ENCODE measurements at regions of chr5 and their contacts with region 1.

Region 1: DNA sequence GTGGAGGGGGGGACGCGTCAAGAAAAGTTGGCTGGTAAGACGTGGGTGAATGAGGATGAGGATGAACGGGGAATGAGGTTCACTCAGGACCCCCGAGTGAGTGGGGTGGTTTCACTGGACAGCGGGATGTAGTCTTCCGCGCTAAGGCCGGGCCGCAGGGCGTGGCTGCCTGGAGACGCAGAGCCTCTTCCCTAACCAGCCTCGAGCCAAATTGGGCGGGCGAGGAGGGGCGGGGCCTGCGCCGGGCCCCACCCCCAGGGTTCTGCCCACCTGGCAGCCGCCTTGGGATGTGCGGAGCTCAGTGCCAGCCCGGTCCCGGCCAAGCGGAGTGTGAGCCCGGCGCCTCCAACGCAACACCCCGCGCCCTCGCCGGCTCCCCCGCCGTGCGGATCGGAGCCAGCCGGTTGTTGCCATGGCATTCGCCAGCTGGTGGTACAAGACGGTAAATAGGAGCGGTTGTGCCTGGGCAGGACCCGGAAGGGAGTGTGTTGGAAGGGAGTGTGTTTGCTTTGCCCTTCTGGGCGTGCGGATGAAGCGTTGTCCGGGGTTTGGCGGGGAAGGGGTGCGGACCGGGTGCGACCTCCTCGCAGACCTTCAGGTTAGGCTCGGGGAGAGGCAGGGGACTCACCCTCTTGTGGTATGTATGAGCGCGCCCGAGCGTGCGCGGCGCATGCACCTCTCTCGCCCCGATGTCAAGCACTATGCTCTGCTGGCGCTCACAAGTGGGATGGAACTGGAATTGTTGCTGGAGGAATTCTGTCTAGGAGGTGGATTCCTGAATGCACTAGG is 743 bp downstream of the CAST start:
- DNase-seq: peak; percentile 84 to 89 (median 86)
- H3K4me3 ChIP-seq: peak overlapping the region; percentile 59 to 89
- H3K4me3 Mint-ChIP-seq: peak overlapping the region; percentile 96 to 98 (median 97)
- H3K27ac ChIP-seq: peak overlapping the region; percentile 93
- H3K27ac Mint-ChIP-seq: peak overlapping the region; percentile 96 to 99 (median 98)
- H3K4me1 ChIP-seq: peaks cover 48% of the 10 kb centered on the region
- H3K4me1 Mint-ChIP-seq: peaks cover 36 to 69% (median 53%) of the 10 kb centered on the region in 4 donors
- H3K27me3 ChIP-seq: no peaks in the 10 kb centered on the region
- H3K27me3 Mint-ChIP-seq: no peaks in the 10 kb centered on the region

Region 2: GRCh38 chr5:95646554-95647431 is 1016.1 kb before region 1 on chr5 and contains the start of gene RFESD:
- CTCF ChIA-PET with region 1: no interaction called
- POLR2A ChIA-PET with region 1: no interaction called
- intact Hi-C with region 1: loop called (anchors 10 kb)
- DNase-seq: peak; percentile 91 to 95 (median 92)
- H3K4me3 ChIP-seq: peak within 1 kb of the TSS; percentile 71 to 94
- H3K4me3 Mint-ChIP-seq: peak within 1 kb of the TSS; percentile 87 to 93 (median 89)
- H3K27ac ChIP-seq: peak within 1 kb of the TSS; percentile 84
- H3K27ac Mint-ChIP-seq: peak within 1 kb of the TSS; percentile 57 to 94 (median 93)
- H3K4me1 ChIP-seq: peaks cover 31% of the 10 kb centered on the region
- H3K4me1 Mint-ChIP-seq: peaks cover 20 to 42% (median 26%) of the 10 kb centered on the region in 4 donors
- H3K27me3 ChIP-seq: no peaks in the 10 kb centered on the region
- H3K27me3 Mint-ChIP-seq: no peaks in the 10 kb centered on the region
- total RNA-seq, gene RFESD: 9.1 to 9.3 TPM

Region 3: DNA sequence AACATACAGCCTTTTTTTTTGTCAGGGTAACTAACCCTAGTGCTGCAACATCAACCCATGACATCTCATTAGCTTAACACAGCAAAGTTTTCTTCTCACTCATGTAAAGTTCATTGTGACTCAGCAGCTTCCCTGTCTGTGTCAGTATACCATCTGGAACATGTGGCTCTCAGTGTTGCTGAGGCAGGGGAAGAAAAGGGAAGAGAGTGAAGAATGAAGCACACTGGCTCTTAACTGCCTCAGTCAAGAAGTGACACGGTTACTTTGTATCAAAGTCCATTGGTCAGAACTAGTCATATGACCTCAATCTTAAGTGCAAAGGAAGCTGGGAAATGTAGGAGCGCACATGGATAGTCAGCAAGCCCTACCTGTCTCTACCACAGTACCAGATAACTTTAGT is 516.2 kb before region 1 on chr5:
- CTCF ChIA-PET with region 1: no interaction called
- POLR2A ChIA-PET with region 1: no interaction called
- intact Hi-C with region 1: no loop called
- DNase-seq: no peak
- H3K4me3 ChIP-seq: no peak overlapping the region
- H3K4me3 Mint-ChIP-seq: no peak overlapping the region
- H3K27ac ChIP-seq: no peak overlapping the region
- H3K27ac Mint-ChIP-seq: no peak overlapping the region
- H3K4me1 ChIP-seq: no peaks in the 10 kb centered on the region
- H3K4me1 Mint-ChIP-seq: no peaks in the 10 kb centered on the region
- H3K27me3 ChIP-seq: no peaks in the 10 kb centered on the region
- H3K27me3 Mint-ChIP-seq: peaks cover 0 to 3% of the 10 kb centered on the region in 2 donors

Region 4: GRCh38 chr5:96536991-96537785 is 125.7 kb before region 1 on chr5:
- CTCF ChIA-PET with region 1: no interaction called
- POLR2A ChIA-PET with region 1: interaction called, 6 read pairs
- intact Hi-C with region 1: loop called (anchors 2 kb)
- DNase-seq: peak; percentile 48 to 83 (median 75)
- H3K4me3 ChIP-seq: peak overlapping the region in 1 of 2 donors; percentile 1
- H3K4me3 Mint-ChIP-seq: peak overlapping the region; percentile 18 to 93 (median 76)
- H3K27ac ChIP-seq: peak overlapping the region; percentile 38
- H3K27ac Mint-ChIP-seq: peak overlapping the region; percentile 83 to 100 (median 94)
- H3K4me1 ChIP-seq: peaks cover 30% of the 10 kb centered on the region
- H3K4me1 Mint-ChIP-seq: peaks cover 23 to 41% (median 30%) of the 10 kb centered on the region in 4 donors
- H3K27me3 ChIP-seq: no peaks in the 10 kb centered on the region
- H3K27me3 Mint-ChIP-seq: no peaks in the 10 kb centered on the region

Region 5: DNA sequence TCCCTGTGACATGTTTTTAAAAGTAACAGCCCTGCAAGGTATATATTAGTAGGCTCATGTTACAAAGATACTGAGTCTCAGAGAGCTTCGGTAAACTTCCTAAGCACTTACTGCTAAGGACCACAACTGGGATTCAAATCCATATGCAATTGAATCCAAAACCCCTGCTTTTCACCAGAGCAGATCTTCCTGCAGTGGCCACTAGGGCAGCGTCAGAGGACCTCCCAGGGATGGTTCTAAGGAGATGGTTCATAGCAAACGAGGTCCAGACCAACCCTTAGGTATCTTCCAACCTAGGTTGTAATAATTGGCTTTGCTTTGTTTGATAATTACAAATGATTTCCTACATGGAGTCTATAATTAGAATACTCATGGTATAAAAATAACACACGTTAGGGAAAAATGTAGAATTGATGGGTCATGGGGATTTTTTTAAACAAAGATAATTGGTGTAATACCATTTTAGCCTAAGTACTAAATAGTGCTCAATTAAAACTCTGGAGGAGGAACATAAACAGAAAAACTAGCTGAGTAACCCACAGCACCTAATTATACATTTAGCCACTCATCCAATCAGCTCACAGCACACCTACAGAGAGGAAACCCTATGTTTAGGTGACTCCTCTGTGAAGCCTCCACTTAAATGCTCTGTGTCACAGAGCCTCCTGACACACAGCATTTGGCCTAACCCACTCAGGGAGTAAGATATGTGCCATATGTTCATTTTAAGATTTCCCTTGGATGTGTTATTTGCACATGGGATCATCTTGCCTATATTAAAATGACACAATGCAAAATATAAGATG is 10.8 kb before region 1 on chr5:
- CTCF ChIA-PET with region 1: interaction called, 4 read pairs
- POLR2A ChIA-PET with region 1: interaction called, 14 read pairs
- intact Hi-C with region 1: no loop called
- DNase-seq: no peak
- H3K4me3 ChIP-seq: no peak overlapping the region
- H3K4me3 Mint-ChIP-seq: no peak overlapping the region
- H3K27ac ChIP-seq: no peak overlapping the region
- H3K27ac Mint-ChIP-seq: no peak overlapping the region
- H3K4me1 ChIP-seq: peaks cover 22% of the 10 kb centered on the region
- H3K4me1 Mint-ChIP-seq: peaks cover 14 to 30% (median 23%) of the 10 kb centered on the region in 4 donors
- H3K27me3 ChIP-seq: no peaks in the 10 kb centered on the region
- H3K27me3 Mint-ChIP-seq: peaks cover 3 to 11% of the 10 kb centered on the region in 2 donors

Region 6: GRCh38 chr5:96702503-96703383 is 39.8 kb after region 1 on chr5:
- CTCF ChIA-PET with region 1: interaction called, 3 read pairs
- POLR2A ChIA-PET with region 1: interaction called, 50 read pairs
- intact Hi-C with region 1: loop called (anchors 1 kb)
- DNase-seq: peak; percentile 75 to 93 (median 80)
- H3K4me3 ChIP-seq: peak overlapping the region; percentile 13 to 59
- H3K4me3 Mint-ChIP-seq: peak overlapping the region; percentile 87 to 97 (median 94)
- H3K27ac ChIP-seq: peak overlapping the region; percentile 92
- H3K27ac Mint-ChIP-seq: peak overlapping the region; percentile 97 to 99 (median 98)
- H3K4me1 ChIP-seq: peaks cover 23% of the 10 kb centered on the region
- H3K4me1 Mint-ChIP-seq: peaks cover 30 to 64% (median 47%) of the 10 kb centered on the region in 4 donors
- H3K27me3 ChIP-seq: no peaks in the 10 kb centered on the region
- H3K27me3 Mint-ChIP-seq: no peaks in the 10 kb centered on the region

Region 7: DNA sequence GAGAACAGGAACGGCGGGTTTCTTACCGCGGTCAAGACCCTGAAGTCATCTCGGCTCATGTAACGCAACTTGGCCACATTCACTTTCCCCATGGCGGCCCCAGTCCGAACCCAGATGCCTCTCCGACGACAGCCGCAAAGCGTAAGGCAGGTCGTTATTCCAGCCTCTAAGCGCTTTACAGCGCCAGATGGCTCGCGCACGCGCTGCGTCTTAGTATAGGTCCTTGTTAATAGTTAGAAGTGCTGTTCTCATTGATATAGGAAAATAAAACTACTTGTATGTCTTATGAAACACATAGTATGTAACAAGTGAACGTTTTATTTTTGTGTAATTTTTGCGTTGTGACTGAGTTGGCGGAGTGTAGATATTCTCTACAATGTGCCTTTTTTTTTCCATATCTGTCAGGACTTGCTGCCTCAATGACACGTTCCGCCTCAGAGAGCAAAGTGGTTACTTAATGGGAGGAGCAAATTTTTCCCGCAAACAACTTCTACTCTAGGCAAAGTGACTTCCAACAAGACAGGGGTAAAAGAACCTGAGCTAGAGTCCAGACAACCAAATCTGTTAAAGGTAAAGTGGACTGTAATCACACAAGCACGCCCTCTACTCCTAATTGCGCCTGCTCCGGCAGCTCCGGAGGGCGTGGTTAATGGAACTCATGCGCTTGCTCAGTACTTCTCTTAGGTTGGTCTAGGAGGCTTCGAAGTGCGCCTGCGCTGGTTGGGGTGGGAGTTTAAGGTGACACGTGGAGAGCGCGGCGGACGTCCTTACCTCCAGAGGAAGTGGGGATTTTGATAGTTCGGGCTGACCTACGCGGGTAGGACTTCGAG is 520.4 kb after region 1 on chr5 and contains the start of gene RIOK2:
- CTCF ChIA-PET with region 1: interaction called, 3 read pairs
- POLR2A ChIA-PET with region 1: interaction called, 5 read pairs
- intact Hi-C with region 1: loop called (anchors 1 kb)
- DNase-seq: peak; percentile 91 to 94 (median 92)
- H3K4me3 ChIP-seq: peak within 1 kb of the TSS; percentile 77 to 87
- H3K4me3 Mint-ChIP-seq: peak within 1 kb of the TSS; percentile 94 to 99 (median 97)
- H3K27ac ChIP-seq: peak within 1 kb of the TSS; percentile 95
- H3K27ac Mint-ChIP-seq: peak within 1 kb of the TSS; percentile 99 to 100 (median 100)
- H3K4me1 ChIP-seq: peaks cover 29% of the 10 kb centered on the region
- H3K4me1 Mint-ChIP-seq: peaks cover 23 to 50% (median 38%) of the 10 kb centered on the region in 4 donors
- H3K27me3 ChIP-seq: no peaks in the 10 kb centered on the region
- H3K27me3 Mint-ChIP-seq: no peaks in the 10 kb centered on the region
- total RNA-seq, gene RIOK2: 38.2 to 40.8 TPM